HEK293 (cell line): ENCODE measurements at regions of chr2 and their contacts with region 1.

Region 1: DNA sequence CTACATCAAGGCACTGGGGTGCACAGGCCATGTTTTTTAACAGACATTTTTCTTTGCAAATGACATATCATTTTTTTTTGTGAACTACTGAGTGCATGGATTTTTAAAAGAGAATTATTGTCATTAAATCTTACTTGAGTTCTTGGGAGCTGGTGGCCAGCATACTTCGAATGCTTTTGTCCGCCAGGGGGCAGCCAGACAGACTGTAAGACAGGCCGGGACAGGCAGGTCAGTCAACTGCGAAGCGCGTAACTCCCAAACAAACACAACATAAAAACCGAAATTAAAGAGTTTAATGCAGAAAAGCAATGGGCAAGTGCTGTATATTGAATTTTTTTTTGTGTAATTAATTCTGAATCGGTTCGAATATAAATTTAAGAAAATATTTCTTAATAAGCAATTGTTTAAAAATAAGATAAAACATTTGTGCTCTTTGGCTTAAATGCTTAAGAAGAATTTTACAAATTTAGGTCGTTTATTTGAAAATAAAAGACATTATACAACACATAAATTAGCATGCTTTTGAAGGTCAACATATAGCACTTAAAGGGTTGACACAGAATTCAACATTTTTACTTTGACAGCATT is 142.2 kb upstream of the PXDN start:
- H3K4me3 ChIP-seq: no peak overlapping the region
- H3K27ac ChIP-seq: no peak overlapping the region
- H3K4me1 ChIP-seq: no peaks in the 10 kb centered on the region
- CTCF ChIP-seq: no peak

Region 2: DNA sequence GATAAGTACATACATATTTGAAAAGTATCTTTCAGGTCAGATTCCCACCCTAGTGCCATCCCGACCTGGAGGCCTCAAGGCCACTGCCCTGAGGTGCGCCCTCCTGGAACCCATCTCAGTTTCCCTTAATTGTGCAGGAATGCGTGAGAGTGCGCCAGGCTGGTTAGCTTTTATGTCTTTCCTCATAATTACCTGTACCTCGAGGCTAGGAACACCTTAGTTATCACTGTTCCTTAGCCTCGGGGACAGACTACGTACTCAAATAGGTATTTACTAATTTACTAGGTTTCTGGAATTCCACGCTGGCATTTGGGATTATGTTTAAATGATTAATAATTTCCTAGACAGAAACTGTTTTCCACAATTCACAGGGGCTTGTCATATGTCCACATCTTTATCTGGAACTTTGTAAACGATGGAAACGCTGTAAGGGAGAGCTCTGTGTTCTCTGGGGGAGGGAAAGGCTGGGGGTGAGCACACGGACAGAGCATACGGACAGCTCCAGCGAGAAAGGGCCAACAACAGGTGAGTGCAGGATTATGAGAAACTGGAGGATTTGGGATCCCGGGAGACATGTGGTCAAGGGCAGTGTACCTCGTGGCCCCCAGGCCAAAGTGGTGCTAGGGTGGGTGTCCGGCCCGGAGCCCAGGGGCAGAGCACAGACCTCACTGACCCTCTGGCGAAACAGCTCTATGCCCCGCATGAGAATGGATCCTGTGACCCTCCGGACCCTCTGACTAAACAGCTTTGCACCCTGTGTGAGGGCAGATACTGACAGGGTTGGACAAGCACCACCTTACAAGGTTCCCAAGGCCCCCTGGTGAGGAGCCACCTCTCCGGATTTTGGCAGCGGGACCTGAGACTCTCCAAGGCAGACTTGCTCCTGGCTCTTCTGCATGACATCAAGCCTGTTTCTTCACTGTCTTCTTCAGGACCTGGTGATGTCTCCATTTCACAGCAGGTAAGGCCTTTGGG is 40.2 kb before region 1 on chr2:
- CTCF ChIA-PET with region 1: no interaction called
- POLR2A ChIA-PET with region 1: no interaction called
- H3K4me3 ChIP-seq: no peak overlapping the region
- H3K27ac ChIP-seq: no peak overlapping the region
- H3K4me1 ChIP-seq: no peaks in the 10 kb centered on the region
- CTCF ChIP-seq: no peak

Region 3: GRCh38 chr2:1900736-1901135 is 14.2 kb after region 1 on chr2:
- CTCF ChIA-PET with region 1: interaction called, 13 read pairs
- POLR2A ChIA-PET with region 1: no interaction called
- H3K4me3 ChIP-seq: no peak overlapping the region
- H3K27ac ChIP-seq: no peak overlapping the region
- H3K4me1 ChIP-seq: no peaks in the 10 kb centered on the region
- CTCF ChIP-seq: peak; percentile 44

Region 4: GRCh38 chr2:1910592-1911246 is 24.2 kb after region 1 on chr2:
- CTCF ChIA-PET with region 1: interaction called, 12 read pairs
- POLR2A ChIA-PET with region 1: no interaction called
- H3K4me3 ChIP-seq: no peak overlapping the region
- H3K27ac ChIP-seq: no peak overlapping the region
- H3K4me1 ChIP-seq: no peaks in the 10 kb centered on the region
- CTCF ChIP-seq: no peak